ENCODE measurements at regions of chr7 and their contacts with region 1.

Region 1: DNA sequence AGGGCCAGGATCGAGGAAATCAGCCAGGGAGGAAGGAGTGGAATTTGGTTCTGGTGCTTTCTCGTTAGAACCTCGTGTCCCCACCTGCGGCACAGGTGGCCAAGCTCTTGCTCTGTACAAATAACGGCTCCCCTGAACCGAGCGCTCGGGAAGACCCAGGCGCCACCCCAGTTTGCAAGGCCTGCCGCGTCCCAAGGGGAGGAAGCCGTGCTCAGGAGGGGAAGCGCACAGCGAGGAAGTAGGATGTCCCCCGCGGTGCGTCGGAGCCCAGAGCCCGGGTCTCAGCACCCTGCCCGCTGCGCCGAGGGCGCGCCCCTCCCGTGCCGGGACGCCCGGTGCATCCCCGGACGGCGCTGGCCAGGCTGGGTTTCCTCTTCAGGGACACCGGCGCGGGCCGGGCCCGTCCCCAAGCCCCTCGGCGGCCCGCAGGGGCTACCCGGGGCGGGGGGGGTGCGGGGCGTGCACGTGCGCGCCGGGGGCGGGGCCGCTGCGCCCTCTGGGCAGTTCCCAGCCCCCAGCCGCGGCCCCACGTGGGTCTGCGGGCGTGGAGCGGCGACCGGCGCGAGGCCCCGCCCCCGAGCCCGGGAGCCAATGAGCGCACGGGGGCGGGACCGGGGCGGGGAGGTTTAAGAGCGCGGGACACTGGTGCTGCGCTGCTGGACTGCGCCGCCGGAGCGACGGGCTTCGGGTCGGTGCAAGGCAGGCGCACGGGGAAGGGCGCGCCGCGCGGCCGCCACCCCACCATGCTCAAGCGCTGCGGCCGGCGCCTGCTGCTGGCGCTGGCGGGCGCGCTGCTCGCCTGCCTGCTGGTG is at the start of gene LFNG:
- DNase-seq: peak; percentile 82
- H3K4me3 ChIP-seq: peak within 1 kb of the TSS; percentile 17 to 63 (median 43)
- H3K27ac ChIP-seq: no peak within 1 kb of the TSS
- H3K4me1 ChIP-seq: peaks cover 38% of the 10 kb centered on the region
- H3K27me3 ChIP-seq: no peaks in the 10 kb centered on the region
- CTCF ChIP-seq: no peak
- POLR2A ChIP-seq: peak; percentile 98
- total RNA-seq, gene LFNG: 12.6 and 15.1 TPM in 2 replicates

Region 2: GRCh38 chr7:2444476-2444875 is 74.8 kb before region 1 on chr7:
- CTCF ChIA-PET with region 1: no interaction called
- POLR2A ChIA-PET with region 1: no interaction called
- dilution Hi-C with region 1: no loop called
- intact Hi-C with region 1: no loop called
- DNase-seq: no peak
- H3K4me3 ChIP-seq: no peak overlapping the region
- H3K27ac ChIP-seq: no peak overlapping the region
- H3K4me1 ChIP-seq: no peaks in the 10 kb centered on the region
- H3K27me3 ChIP-seq: no peaks in the 10 kb centered on the region
- CTCF ChIP-seq: no peak
- POLR2A ChIP-seq: no peak

Region 3: DNA sequence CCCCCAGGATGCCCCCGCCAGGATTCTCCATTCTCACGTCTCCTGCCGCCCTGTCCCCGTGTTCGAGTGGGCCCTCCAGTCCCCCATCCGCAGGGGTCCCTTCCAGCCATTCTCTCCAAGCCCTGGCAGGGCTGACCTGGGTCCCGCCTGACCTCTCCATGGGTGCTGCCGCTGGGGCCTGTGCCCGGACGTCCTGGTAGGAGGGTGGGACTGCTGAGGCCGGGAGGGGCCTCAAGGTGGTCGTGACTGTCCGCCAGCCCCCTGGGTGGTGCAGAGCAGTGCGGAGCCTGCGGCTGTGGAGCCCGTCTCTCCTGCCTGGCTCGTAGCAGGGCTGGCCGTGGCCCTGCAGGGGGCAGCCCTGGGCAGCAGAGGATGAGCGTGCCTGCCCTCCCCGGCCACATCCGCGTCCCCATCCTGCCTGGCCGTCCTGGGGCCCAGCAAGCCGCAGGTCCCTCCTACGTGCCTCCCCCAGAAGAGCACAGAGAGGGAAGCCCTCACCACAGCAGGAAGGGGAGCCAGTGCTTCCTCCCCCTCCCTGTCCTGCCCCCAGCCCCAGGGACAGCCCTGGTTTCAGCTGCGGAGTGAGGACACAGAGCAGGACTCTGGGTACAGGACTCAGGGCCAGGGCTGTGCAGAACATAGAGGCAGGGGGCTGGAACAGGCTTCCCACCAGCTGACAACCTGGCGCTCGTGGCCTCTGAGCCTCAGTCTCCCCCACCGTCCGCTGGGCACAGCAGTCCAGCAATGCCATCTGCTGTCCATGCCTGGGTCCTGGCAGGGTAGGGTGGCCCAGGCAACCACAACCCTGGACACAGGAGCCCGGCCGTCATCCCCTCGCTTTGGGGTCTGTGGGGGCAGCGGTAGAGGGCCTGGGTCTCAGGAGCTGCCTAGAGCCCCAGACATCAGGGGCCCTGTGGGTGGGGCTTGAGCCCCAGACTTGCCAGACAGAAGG is 41.6 kb before region 1 on chr7:
- CTCF ChIA-PET with region 1: no interaction called
- POLR2A ChIA-PET with region 1: no interaction called
- dilution Hi-C with region 1: no loop called
- intact Hi-C with region 1: loop called (anchors 2 kb)
- DNase-seq: peak; percentile 53
- H3K4me3 ChIP-seq: no peak overlapping the region
- H3K27ac ChIP-seq: no peak overlapping the region
- H3K4me1 ChIP-seq: no peaks in the 10 kb centered on the region
- H3K27me3 ChIP-seq: peaks cover 0 to 4% of the 10 kb centered on the region in 2 experiments
- CTCF ChIP-seq: peak; percentile 81 to 95
- POLR2A ChIP-seq: no peak

Region 4: DNA sequence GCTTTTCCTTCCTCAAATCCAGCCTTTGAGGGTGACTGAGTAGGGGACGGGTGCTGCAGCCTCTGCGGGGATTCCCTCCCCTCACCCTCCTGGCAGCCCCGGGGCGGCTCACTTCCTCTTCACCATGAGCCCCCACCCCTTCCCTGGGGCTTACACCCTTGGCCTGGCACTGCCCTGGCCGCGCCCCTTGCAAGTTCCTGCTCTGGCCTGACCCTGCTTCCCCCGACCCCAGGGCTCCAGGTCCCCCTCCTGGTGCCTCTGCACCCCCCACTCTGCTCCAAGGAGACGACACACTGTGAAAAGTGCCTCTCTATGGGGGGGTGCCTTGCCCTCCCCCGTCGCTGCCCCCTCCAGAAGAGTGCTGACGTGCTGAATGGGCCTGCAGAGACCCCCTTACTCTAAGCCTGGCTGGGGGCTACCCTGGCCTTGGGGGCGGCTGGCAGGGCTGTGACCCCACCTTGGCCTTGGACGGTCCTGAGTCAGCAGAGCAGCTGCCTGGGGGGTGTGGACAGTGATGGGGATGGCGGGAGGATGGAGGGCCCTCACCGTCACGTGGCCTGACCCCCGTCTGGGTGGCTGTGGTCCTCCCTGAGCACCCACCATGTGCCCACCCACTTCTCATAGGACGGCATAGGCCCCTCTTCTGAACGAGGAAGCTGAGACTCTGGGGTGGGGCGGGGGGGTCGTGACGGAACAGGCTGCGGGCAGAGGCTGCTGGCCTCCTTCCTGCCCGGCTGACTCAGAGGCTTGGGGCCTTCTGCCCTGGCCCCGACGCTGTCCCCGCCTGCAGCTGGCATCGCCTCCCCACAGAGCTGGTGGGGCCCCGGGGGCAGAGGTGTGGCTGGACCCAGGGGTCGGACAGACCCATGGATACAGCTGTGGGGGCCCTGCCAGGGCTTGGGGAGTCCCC is 10.1 kb after region 1 on chr7:
- CTCF ChIA-PET with region 1: no interaction called
- POLR2A ChIA-PET with region 1: no interaction called
- dilution Hi-C with region 1: no loop called
- intact Hi-C with region 1: loop called (anchors 1 kb)
- DNase-seq: peak; percentile 44
- H3K4me3 ChIP-seq: no peak overlapping the region
- H3K27ac ChIP-seq: peak overlapping the region; percentile 18
- H3K4me1 ChIP-seq: peaks cover 32% of the 10 kb centered on the region
- H3K27me3 ChIP-seq: no peaks in the 10 kb centered on the region
- CTCF ChIP-seq: no peak
- POLR2A ChIP-seq: no peak

Region 5: DNA sequence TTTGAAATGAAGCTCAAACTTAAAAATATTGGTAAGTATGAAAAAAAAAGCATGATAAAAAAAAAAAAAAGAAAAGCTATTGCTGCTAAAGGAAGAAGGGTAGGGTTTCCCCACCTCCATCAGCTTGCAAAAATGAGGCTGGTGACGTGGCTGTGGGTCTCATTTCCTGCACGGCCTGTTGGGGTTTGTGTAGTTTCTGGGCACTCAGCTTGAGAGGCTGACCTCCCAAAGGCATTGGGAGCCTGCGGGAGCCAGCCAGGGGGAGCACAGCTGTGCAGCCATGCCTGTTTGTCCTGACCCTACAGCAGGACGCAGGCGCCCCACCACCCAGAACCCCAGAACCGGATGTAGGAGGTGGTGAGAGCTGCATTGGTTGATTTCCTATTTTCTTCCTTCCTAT is 573.1 kb after region 1 on chr7:
- CTCF ChIA-PET with region 1: no interaction called
- POLR2A ChIA-PET with region 1: no interaction called
- dilution Hi-C with region 1: no loop called
- intact Hi-C with region 1: no loop called
- DNase-seq: no peak
- H3K4me3 ChIP-seq: no peak overlapping the region
- H3K27ac ChIP-seq: no peak overlapping the region
- H3K4me1 ChIP-seq: no peaks in the 10 kb centered on the region
- H3K27me3 ChIP-seq: peaks cover 0 to 4% of the 10 kb centered on the region in 2 experiments
- CTCF ChIP-seq: no peak
- POLR2A ChIP-seq: no peak

Measured in endothelial cell of umbilical vein (primary cell).